ENCODE measurements at regions of chr2 and their contacts with region 1.

Region 1: GRCh38 chr2:207558106-207558505 is 28.3 kb downstream of the CREB1 start:
- DNase-seq: no peak
- ATAC-seq: no peak
- H3K4me3 ChIP-seq: no peak overlapping the region
- H3K27ac ChIP-seq: no peak overlapping the region
- H3K4me1 ChIP-seq: peaks cover 4% of the 10 kb centered on the region
- H3K27me3 ChIP-seq: no peaks in the 10 kb centered on the region
- CTCF ChIP-seq: no peak
- EP300 ChIP-seq: no peak
- POLR2A ChIP-seq: no peak
- RAD21 ChIP-seq: no peak

Region 2: DNA sequence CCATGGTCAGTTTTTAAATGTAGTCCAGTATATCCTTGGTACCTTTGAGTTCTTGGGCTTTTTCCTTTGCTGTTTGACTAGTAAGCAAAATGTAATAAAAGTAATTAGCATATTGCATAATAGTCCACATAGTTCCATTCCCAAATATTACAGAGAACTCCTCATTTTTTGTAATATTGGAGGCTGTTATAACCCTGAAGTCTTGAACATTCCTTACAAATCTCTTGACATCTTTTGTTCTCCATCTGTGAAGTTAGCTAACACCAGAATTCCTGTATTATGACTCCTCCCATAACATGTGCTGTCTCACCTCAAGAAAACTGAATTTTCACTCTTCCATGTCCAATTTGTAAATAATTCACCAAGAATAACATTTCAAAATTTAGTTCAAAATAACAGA is 11.3 kb before region 1 on chr2:
- CTCF ChIA-PET with region 1: no interaction called
- POLR2A ChIA-PET with region 1: no interaction called
- RAD21 ChIA-PET with region 1: no interaction called
- SMC1A ChIA-PET with region 1: interaction called, 13 read pairs
- in situ Hi-C with region 1: no loop called
- intact Hi-C with region 1: no loop called
- DNase-seq: no peak
- ATAC-seq: no peak
- H3K4me3 ChIP-seq: no peak overlapping the region
- H3K27ac ChIP-seq: no peak overlapping the region
- H3K4me1 ChIP-seq: peaks cover 3% of the 10 kb centered on the region; the same call in 1 of the 2 replicates
- H3K27me3 ChIP-seq: no peaks in the 10 kb centered on the region
- CTCF ChIP-seq: no peak
- EP300 ChIP-seq: no peak
- POLR2A ChIP-seq: no peak
- RAD21 ChIP-seq: no peak

Measured in GM12878 (cell line).